Activated T-helper 2 cell treated with anti-CD3 and anti-CD28 coated beads, Interferon-gamma antibody, Interleukin-2, Interleukin-4, amounts not matched to agents 10 μg/mL and 5 μg/mL and 100 μg/mL, durations not matched to agents 14 hours and 24 hours and 36 hours (primary cell): ENCODE measurements at regions of chr1 and their contacts with region 1.

Region 1: DNA sequence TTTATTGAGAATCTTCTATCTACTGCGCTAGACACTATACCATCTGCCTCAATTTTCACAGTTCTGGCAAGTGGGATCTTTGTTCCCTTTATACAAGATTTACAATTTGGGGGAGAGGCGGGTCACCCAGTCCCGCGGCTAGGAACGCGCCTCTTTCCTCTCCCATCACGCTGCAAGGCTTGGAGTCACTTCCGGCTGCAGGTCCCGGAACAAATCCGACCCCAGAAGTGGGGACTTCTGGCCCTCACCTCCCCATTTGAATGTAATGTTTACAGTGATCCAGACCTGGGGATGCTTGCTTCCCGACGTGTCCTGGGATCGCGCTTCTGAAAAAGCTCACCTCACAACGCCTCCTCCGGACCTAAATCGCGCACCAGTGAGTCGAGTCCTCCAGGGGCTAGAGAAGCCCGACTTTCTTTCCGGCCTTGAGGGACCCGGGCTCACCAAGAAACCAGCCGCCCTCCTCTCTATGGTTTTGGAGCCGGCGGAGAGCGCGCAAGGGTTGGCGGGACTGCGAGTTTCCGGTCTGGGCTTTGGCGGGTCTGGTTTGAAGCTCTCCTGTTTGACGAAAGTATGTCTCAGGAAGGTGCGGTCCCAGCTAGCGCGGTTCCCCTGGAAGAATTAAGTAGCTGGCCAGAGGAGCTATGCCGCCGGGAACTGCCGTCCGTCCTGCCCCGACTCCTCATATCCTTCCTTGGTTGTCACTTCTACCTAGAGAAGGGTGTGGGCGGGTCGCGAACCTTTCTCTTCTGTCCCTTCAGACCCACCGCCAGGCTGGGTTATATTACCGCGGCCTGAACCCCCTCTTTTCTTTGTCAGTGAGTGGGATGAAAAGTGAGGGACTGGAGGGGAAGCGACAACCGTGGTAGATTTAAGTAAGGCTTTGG is at the start of gene METTL18:
- DNase-seq: peak; percentile 92
- H3K4me3 Mint-ChIP-seq: peak within 1 kb of the TSS; percentile 92
- H3K27ac Mint-ChIP-seq: peak within 1 kb of the TSS; percentile 98
- H3K4me1 Mint-ChIP-seq: peaks cover 51% of the 10 kb centered on the region
- H3K27me3 Mint-ChIP-seq: no peaks in the 10 kb centered on the region
- total RNA-seq, gene METTL18: 8.9 and 10.9 TPM in 2 replicates

Region 2: GRCh38 chr1:169250022-169250421 is 544.8 kb before region 1 on chr1:
- intact Hi-C with region 1: no loop called
- DNase-seq: no peak
- H3K4me3 Mint-ChIP-seq: no peak overlapping the region
- H3K27ac Mint-ChIP-seq: no peak overlapping the region
- H3K4me1 Mint-ChIP-seq: no peaks in the 10 kb centered on the region
- H3K27me3 Mint-ChIP-seq: no peaks in the 10 kb centered on the region

Region 3: GRCh38 chr1:169586395-169587255 is 208.1 kb before region 1 on chr1 and contains the start of gene F5:
- intact Hi-C with region 1: loop called (anchors 1 kb)
- DNase-seq: peak; percentile 69
- H3K4me3 Mint-ChIP-seq: peak within 1 kb of the TSS; percentile 89
- H3K27ac Mint-ChIP-seq: peak within 1 kb of the TSS; percentile 83
- H3K4me1 Mint-ChIP-seq: peaks cover 59% of the 10 kb centered on the region
- H3K27me3 Mint-ChIP-seq: no peaks in the 10 kb centered on the region
- total RNA-seq, gene F5: 25.0 and 26.0 TPM in 2 replicates

Region 4: GRCh38 chr1:169595764-169596711 is 198.7 kb before region 1 on chr1:
- intact Hi-C with region 1: loop called (anchors 2 kb)
- DNase-seq: no peak
- H3K4me3 Mint-ChIP-seq: no peak overlapping the region
- H3K27ac Mint-ChIP-seq: no peak overlapping the region
- H3K4me1 Mint-ChIP-seq: peaks cover 41% of the 10 kb centered on the region
- H3K27me3 Mint-ChIP-seq: peaks cover 4% of the 10 kb centered on the region

Region 5: DNA sequence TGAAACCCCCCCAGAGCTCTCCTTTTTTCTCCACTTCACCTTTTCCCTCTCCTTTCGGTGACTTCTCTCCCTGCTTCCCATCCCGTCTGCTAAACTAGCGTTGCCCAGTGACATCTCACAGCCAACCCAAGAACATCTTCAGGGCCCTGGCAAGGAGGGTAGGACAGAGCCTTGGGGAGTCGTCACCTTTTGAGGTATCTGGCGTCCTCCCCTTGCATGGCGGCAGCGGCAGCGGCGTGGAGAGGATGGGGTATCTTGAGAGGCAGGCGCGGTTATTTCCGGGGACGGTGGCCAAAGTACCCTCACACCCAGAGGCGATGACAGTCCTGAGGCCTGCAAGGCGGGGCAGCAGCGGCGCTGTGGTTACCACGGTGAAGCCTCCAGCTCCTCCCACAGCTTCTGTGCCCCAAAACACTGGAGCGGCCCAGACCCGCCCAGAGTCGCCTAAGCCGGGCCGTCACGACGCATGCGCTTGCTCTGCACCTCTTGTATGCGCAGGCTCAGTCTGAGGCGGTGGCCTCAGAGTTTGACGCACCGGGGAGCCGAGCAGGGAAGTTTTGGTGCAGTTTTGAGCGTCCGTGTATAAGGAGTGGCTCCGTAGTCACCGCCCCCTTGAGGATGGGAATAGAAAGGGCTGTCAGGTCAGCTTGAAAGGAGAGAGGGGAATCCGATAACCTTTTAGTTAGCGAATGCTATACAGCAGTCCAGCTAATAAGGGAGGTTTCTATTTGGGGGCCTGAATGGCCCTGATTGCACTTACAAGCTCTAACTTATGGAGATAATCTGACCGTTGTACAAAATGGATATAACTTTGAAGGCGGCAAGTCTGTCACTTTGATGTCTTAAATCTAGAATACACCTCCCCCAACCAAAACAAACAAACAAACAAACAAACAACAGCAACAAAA is 279.7 kb after region 1 on chr1 and contains the start of gene KIFAP3:
- intact Hi-C with region 1: loop called (anchors 5 kb)
- DNase-seq: peak; percentile 96
- H3K4me3 Mint-ChIP-seq: peak within 1 kb of the TSS; percentile 96
- H3K27ac Mint-ChIP-seq: peak within 1 kb of the TSS; percentile 94
- H3K4me1 Mint-ChIP-seq: peaks cover 28% of the 10 kb centered on the region
- H3K27me3 Mint-ChIP-seq: no peaks in the 10 kb centered on the region
- total RNA-seq, gene KIFAP3: 15.1 and 15.5 TPM in 2 replicates

Region 6: GRCh38 chr1:170531758-170532657 is 737.2 kb after region 1 on chr1 and contains the start of gene GORAB:
- intact Hi-C with region 1: loop called (anchors 5 kb)
- DNase-seq: peak; percentile 84
- H3K4me3 Mint-ChIP-seq: no peak within 1 kb of the TSS
- H3K27ac Mint-ChIP-seq: no peak within 1 kb of the TSS
- H3K4me1 Mint-ChIP-seq: peaks cover 6% of the 10 kb centered on the region
- H3K27me3 Mint-ChIP-seq: peaks cover 12% of the 10 kb centered on the region
- total RNA-seq, gene GORAB: 10.1 and 12.3 TPM in 2 replicates